ENCODE measurements at regions of chr9 and their contacts with region 1.

Region 1: DNA sequence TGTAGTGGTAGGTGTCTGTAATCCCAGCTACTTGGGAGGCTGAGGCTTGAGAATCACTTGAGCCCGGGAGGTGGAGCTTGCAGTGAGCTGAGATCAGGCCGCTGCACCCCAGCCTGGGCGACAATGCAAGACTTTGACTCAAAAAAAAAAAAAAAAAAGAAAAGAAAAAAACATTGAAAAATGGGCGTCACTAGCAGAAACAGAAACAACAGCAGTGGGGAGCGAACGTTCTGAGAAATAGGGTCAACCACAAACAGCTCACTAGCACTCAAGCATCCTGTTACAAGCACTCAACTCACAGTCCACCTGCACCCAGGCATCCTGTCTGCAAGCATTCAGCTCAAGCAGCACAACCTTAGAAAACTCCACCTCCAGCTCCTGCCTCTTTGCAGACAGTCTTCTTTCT is 17.2 kb downstream of the TRIM14 start:
- DNase-seq: no peak
- H3K4me3 ChIP-seq: no peak overlapping the region
- H3K27ac ChIP-seq: no peak overlapping the region
- H3K4me1 ChIP-seq: no peaks in the 10 kb centered on the region
- H3K27me3 ChIP-seq: no peaks in the 10 kb centered on the region
- CTCF ChIP-seq: no peak

Region 2: DNA sequence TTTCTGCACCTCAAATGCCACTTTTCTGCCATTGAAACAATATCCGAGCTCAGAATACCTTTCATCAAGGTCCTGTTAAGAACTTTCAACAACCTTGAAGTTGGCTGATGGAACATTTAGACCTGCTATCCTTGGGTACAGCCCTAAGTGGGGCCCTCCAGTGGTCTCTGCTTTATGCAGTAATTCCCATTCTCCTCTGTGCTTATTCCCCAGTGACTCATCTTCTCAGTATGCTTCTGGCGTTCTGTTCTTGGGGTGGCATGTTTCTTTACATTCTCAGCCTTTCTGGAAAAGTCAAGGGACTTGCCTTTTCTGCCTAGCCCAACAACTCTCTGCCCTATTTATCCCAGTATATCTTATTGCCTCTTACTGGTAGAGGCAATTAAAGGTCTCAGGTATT is 111.6 kb before region 1 on chr9:
- CTCF ChIA-PET with region 1: no interaction called
- POLR2A ChIA-PET with region 1: interaction called, 21 read pairs
- intact Hi-C with region 1: no loop called
- DNase-seq: peak; percentile 27 to 68
- H3K4me3 ChIP-seq: no peak overlapping the region
- H3K27ac ChIP-seq: peak overlapping the region; percentile 42
- H3K4me1 ChIP-seq: peaks cover 54% of the 10 kb centered on the region
- H3K27me3 ChIP-seq: no peaks in the 10 kb centered on the region
- CTCF ChIP-seq: no peak